ENCODE measurements at regions of chr20 and their contacts with region 1.

Region 1: DNA sequence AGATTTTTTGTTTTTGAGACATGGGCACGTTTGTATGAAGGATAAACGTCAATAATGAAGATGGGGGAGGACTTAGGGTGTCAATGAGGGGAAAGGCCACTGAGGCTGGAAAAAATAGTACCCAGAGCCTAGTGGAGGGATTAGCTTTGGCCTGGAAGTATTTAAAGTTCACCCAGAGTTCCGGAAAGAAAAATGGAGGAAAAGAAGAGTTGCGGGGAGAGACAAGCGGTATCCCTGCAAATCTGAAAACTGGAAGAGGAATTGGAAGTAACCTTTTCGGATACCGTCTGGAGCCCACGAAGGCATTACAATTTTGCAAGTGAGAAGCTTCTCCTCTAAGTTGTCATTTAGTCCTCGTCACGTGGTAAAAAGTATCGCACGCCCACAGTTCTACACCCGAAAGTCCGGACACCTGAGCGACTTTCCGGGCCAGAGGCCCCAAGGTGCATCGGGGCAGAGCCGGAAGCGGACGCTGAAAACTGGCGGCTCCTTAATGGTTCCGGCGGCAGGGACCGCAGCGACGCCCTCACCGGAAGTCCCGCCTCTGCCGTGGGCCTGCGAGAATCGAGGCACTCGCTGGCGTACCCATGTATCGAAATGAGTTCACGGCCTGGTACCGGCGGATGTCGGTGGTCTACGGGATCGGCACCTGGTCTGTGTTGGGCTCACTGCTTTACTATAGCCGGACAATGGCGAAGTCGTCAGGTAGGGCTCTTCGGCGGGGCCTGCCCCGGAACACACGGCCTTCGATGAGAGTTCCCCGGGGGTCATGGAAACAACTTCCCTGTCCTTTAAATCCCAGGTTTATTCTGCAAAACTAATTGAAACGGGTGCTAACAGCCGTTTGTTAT is at the start of gene SMIM26:
- DNase-seq: peak; percentile 83 to 98 (median 92)

Region 2: DNA sequence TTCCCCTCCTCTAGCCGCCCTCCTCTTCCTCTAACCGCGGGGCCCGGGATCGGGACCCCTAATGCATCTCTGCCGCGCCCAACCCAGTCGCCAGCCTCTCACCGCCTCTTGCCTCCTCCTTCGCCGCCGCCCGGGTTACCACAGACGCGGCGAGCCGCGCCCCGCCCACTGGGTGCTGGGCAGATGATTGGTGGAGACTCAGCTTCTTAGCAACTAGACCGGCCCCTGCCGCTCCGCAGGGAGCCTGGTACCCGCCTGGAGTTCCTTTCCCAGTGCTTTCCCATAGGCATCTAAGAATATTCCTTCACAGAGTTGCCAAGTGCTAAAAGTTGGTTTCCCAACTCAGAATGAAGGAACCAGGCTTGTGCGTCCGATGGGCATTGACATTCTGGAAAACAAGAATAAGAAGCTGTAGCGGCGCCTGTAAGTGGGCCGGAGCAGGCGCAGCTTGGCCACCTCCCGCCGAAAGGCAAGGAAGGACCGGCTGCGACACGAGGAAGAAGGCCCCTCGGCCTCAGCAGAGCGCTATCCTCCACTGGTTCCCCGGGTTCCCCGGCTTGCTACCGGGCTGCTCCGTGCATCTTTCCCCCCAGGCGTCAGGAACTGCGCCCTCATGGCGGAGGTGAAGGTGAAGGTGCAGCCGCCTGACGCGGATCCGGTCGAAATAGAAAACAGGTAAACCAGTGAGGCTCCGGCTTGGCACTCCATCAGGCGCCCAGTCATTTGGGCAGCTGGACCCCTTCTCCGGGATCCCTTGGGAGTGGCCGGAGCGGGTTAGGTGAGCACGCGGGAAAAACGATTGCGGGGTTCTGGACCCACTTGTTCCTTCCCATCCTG is 100.0 kb before region 1 on chr20 and contains the starts of genes DZANK1 and POLR3F:
- intact Hi-C with region 1: loop called (anchors 5 kb)
- DNase-seq: peak; percentile 94 to 100 (median 97)

Region 3: GRCh38 chr20:18507218-18508021 is 59.7 kb before region 1 on chr20 and contains the start of gene SEC23B:
- intact Hi-C with region 1: loop called (anchors 2 kb)
- DNase-seq: peak; percentile 93 to 100 (median 97)

Region 4: DNA sequence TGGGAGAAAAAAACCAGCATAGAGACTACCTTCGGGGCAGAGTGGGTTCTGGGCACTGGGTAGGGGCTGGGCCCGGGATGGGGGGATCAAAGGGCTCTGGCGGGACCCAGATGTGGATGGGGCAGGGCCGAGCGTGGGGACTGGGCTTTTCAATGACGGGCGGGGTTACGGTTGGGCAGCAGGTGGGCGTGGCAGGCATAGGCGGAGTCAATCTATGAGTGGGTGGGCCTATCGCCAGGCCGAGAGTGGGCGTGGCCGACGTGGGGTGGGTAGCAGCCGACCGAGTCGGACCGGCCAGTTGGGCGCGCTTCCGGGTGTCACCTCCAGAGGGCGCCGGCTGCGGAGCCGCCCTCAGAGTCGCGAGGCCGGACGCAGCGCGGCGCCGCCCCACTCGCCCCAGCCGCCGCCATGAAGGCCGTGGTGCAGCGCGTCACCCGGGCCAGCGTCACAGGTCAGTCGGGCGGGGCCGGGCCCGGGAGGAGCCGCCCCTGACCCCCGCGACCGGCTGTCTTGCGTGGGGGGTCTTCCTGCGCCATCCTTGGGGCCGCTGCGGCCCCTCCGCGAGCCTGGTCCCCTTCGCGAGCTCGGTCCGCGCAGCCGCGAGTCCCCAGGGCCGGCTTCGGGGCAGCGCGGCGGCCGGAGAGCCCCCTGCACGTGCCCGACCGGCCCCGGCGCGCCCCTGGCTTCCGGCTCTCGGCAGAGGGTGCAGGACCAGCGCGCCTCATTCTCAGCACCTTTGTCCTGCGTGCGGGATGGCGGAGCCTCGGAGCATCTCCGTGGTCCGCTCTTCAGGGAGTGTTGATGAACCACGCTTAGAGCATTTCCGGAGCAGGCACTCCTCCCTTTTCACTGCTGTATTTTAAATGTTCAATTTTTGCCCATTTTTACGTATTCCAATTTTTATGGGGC is 20.8 kb after region 1 on chr20 and contains the start of gene DTD1:
- intact Hi-C with region 1: loop called (anchors 2 kb)
- DNase-seq: peak; percentile 89 to 99 (median 96)

Region 5: GRCh38 chr20:18657575-18657974 is 90.5 kb after region 1 on chr20:
- intact Hi-C with region 1: no loop called
- DNase-seq: peak in 1 of 10 donors; percentile 18

Region 6: DNA sequence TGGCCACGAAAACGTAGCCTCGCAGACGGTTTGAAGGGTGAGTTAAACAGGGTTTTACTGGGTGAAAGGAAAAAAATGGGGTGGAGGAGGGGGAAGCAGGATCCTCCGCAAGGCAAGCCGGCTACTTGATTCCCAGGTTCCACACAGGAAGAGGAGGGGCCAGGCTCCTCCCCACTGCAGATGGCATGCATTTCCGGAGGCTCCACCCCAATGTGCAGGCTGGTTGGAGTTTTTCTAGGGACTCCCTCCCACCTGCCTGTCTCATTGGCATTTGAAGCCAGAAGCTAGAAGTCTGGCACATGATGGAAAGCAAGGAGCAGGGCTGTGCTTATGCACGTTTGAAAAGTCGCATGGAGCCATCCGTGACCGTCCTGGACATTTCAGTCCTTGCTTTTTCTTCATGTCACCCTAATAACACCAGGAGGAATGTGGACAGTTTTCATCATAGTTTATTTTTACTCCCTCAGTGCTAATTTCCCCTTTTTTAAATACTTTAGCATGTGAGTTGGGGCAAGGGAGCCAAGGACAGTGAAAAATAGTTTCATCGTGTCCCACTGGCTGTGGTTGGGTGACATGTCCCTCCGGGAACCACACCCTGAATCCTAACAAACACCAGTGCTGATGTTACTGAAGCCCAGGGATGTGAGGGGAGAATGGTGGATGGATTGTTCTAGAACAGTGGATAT is 1700.7 kb after region 1 on chr20:
- intact Hi-C with region 1: no loop called
- DNase-seq: no peak

Measured in posterior cingulate gyrus (tissue), 11 donors.